Mammary epithelial cell (primary cell): ENCODE measurements at regions of chr1 and their contacts with region 1.

Region 1: GRCh38 chr1:147494998-147495580 is 46.2 kb upstream of the BCL9 start:
- DNase-seq: peak; percentile 51
- H3K4me3 ChIP-seq: no peak overlapping the region
- H3K27ac ChIP-seq: no peak overlapping the region
- H3K4me1 ChIP-seq: no peaks in the 10 kb centered on the region
- H3K27me3 ChIP-seq: peaks cover 3% of the 10 kb centered on the region
- CTCF ChIP-seq: peak; percentile 87 to 95

Region 2: DNA sequence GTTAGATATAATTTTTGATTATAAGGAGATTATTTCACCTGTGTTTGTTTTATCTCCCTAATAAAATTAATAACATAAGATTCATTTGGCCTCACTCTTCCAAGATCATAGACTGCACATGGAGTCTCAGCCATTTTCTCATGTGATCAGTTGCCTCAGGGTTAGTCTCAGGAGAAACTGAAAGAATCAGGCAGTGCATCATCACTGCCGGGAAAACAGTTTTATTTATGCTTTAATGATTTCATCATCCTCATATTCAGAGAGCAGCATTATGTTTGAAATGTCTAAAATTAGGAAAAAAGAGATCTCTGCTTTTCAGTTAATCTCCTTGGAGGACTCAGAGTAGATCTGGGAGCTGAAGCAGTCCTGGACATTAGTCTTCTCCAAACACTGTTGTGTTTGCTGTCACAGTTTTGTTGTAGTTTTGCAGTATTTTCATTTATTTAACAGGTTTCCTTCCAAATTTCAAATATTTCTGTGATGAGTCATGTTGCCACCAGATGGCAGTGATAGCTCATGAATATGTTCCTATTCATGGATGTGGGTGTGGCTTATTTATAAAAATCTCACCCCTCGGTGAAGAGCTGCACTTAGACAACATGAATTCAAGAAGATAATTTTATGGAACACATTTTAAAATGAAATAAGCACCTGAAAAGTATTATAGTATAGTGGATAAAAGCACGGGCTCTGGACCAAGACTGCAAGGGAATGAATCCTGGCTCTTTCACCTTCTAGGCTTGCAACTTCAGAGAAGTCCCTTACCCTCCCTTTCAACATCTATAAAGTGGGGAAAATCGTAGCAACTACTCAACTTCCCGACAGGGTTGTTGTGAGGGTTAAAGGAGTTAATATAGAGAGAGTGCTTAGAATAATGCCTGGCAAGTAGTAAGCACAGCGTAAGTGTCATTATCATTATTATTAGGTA is 221.4 kb before region 1 on chr1:
- CTCF ChIA-PET with region 1: no interaction called
- dilution Hi-C with region 1: no loop called
- in situ Hi-C with region 1: loop called in 1 of 2 experiments (anchors 10 kb)
- intact Hi-C with region 1: loop called (anchors 1 kb)
- DNase-seq: peak; percentile 79
- H3K4me3 ChIP-seq: no peak overlapping the region
- H3K27ac ChIP-seq: peak overlapping the region; percentile 83
- H3K4me1 ChIP-seq: peaks cover 10% of the 10 kb centered on the region
- H3K27me3 ChIP-seq: no peaks in the 10 kb centered on the region
- CTCF ChIP-seq: peak; percentile 30 to 45

Region 3: GRCh38 chr1:147292631-147293251 is 202.3 kb before region 1 on chr1:
- CTCF ChIA-PET with region 1: no interaction called
- dilution Hi-C with region 1: no loop called
- in situ Hi-C with region 1: no loop called
- intact Hi-C with region 1: no loop called
- DNase-seq: peak; percentile 82
- H3K4me3 ChIP-seq: no peak overlapping the region
- H3K27ac ChIP-seq: peak overlapping the region; percentile 66
- H3K4me1 ChIP-seq: peaks cover 8% of the 10 kb centered on the region
- H3K27me3 ChIP-seq: no peaks in the 10 kb centered on the region
- CTCF ChIP-seq: no peak

Region 4: DNA sequence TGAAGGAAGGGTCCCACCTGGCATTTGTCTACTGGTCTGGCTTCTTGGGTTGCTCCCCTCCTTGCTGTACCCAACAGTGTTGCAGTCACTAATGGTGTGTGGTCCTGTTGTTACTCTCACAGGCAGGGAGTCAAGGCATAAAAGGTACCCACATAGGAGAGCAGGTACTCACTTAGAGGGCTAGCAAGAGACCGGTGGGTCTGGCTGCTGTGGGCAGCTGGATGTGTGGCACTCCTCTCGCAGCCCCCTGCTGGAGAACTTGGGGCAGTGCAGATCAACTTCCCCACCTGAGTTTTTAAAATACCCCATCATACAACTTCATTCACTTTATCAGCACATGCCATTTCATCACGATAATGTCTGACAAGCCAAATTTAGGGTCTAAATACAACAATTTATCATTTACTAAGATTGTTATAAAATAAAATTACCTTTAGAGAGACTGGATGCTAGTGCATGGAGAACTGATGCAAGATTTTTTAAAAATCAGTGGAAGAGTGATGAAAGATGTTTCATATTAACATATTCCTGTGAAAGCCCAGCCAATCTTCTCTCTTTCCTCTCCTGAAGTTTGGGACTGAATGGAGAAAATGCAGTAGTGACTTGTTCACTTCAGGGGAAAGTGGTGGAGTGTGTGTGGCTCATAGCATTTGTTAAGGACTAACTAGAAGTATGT is 132.5 kb after region 1 on chr1:
- CTCF ChIA-PET with region 1: no interaction called
- dilution Hi-C with region 1: loop called (anchors 25 kb)
- in situ Hi-C with region 1: loop called in 1 of 2 experiments (anchors 10 kb)
- intact Hi-C with region 1: loop called (anchors 5 kb)
- DNase-seq: peak; percentile 6
- H3K4me3 ChIP-seq: no peak overlapping the region
- H3K27ac ChIP-seq: no peak overlapping the region
- H3K4me1 ChIP-seq: no peaks in the 10 kb centered on the region
- H3K27me3 ChIP-seq: no peaks in the 10 kb centered on the region
- CTCF ChIP-seq: peak; percentile 85 to 96

Region 5: DNA sequence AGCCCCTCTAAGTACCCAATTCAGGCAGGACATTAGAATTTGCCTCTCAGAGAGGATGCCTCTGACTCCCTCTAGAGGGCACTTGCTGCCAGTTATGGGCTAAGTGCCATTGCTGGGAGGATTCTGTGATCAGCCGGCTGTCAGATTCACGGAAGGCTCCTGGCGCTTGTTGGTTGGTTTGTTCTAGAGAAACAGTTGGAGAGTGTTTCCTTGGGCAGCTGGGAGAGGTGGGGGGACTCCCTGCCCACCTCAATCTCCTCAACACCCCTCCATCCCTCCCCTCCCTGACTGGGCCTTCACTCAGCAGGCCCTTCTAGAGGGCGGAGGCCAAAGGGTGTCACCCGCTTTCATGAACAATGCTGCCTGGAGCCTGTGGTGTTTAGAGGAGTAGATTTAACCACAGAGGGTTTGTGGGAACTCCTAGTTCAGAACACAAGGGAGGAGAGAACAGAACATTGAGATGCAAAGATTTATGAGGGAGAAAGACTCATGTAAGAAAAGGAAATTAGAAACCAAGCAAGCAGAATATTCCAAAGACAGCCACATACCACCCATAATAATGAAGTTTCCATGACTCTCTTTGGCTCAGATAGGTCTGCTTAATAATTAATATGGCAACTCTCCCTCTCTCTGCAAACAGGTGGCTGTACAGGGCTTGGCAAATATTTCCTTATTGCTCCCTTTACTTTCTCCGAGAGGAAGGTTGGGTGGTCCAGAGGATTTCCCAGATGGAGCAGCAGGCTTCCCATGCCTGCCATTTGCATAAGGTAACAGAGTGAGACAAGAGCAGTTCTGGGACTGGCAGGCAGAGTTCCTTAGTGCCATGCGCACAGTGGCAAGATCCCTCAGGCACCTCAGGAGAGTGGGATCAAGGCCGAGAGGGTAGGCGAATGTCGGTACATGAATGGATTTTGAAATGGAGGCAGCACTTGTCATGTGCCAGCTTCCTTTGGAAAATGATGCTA is 205.2 kb after region 1 on chr1:
- CTCF ChIA-PET with region 1: no interaction called
- dilution Hi-C with region 1: no loop called
- in situ Hi-C with region 1: no loop called
- intact Hi-C with region 1: loop called (anchors 5 kb)
- DNase-seq: peak; percentile 47
- H3K4me3 ChIP-seq: no peak overlapping the region
- H3K27ac ChIP-seq: no peak overlapping the region
- H3K4me1 ChIP-seq: no peaks in the 10 kb centered on the region
- H3K27me3 ChIP-seq: no peaks in the 10 kb centered on the region
- CTCF ChIP-seq: peak; percentile 97

Region 6: GRCh38 chr1:147723691-147724323 is 228.7 kb after region 1 on chr1:
- CTCF ChIA-PET with region 1: no interaction called
- dilution Hi-C with region 1: no loop called
- in situ Hi-C with region 1: no loop called
- intact Hi-C with region 1: loop called (anchors 10 kb)
- DNase-seq: peak; percentile 15
- H3K4me3 ChIP-seq: no peak overlapping the region
- H3K27ac ChIP-seq: no peak overlapping the region
- H3K4me1 ChIP-seq: peaks cover 12% of the 10 kb centered on the region
- H3K27me3 ChIP-seq: no peaks in the 10 kb centered on the region
- CTCF ChIP-seq: peak; percentile 30 to 62

Region 7: DNA sequence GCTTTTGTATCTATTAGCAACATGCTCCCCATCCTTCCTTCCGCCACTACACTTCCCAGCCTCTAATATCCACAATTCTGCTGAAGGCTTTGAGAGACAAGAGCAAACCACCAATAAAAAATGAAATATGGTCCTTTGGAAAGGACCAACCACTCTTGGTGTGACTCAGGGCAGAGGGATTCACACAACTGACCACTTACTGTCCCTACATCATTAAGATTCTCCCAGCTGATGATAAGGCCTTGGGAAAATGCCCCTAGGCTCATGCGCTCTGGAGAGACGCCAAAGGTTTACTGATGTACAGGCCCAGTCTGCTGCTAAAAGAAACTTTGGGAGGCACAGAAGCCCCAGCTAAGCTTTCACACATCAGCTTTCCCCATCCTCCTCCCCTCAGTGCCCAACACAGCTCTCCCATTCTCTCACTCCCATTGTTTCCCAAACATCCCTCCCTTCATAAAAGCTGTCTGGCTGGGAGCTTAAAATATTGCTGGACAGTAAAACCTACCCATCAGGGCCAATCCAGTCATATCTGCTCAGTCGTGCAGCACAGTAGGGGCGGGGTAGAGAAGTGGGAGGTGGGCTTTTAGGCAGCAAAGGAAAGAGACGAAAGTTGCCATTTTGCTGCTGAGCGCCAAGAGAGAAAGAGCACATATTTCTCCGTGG is 407.2 kb after region 1 on chr1 and contains the start of gene GJA8:
- CTCF ChIA-PET with region 1: no interaction called
- dilution Hi-C with region 1: loop called (anchors 25 kb)
- in situ Hi-C with region 1: loop called in 1 of 2 experiments (anchors 10 kb)
- intact Hi-C with region 1: no loop called
- DNase-seq: no peak
- H3K4me3 ChIP-seq: no peak within 1 kb of the TSS
- H3K27ac ChIP-seq: no peak within 1 kb of the TSS
- H3K4me1 ChIP-seq: peaks cover 4% of the 10 kb centered on the region
- H3K27me3 ChIP-seq: no peaks in the 10 kb centered on the region
- CTCF ChIP-seq: no peak
- total RNA-seq, gene GJA8: not detected